Naive thymus-derived CD4-positive, alpha-beta T cell (primary cell): ENCODE measurements at regions of chr6 and their contacts with region 1.

Region 1: GRCh38 chr6:33323623-33323948 is 6.0 kb upstream of the ZBTB22 start:
- DNase-seq: peak in 1 of 9 donors; percentile 26
- ATAC-seq: no peak
- H3K4me3 ChIP-seq: peak overlapping the region; percentile 64
- H3K4me3 Mint-ChIP-seq: peak overlapping the region; percentile 81 to 100 (median 98)
- H3K27ac ChIP-seq: peak overlapping the region; percentile 84
- H3K27ac Mint-ChIP-seq: peak overlapping the region; percentile 89 to 99 (median 97)
- H3K4me1 ChIP-seq: peaks cover 41% of the 10 kb centered on the region in 2 donors
- H3K4me1 Mint-ChIP-seq: peaks cover 34 to 59% (median 53%) of the 10 kb centered on the region in 7 donors
- H3K27me3 ChIP-seq: no peaks in the 10 kb centered on the region
- H3K27me3 Mint-ChIP-seq: peaks cover 0 to 4% (median 0%) of the 10 kb centered on the region in 5 donors

Region 2: GRCh38 chr6:33208091-33208967 is 115.3 kb before region 1 on chr6 and contains the start of gene RING1:
- CTCF ChIA-PET with region 1: no interaction called
- POLR2A ChIA-PET with region 1: no interaction called
- intact Hi-C with region 1: loop called in 1 of 2 experiments (anchors 1 kb)
- DNase-seq: peak; percentile 80 to 93 (median 87)
- ATAC-seq: peak; percentile 79
- H3K4me3 ChIP-seq: peak within 1 kb of the TSS; percentile 92
- H3K4me3 Mint-ChIP-seq: peak within 1 kb of the TSS; percentile 83 to 97 (median 90)
- H3K27ac ChIP-seq: peak within 1 kb of the TSS; percentile 98
- H3K27ac Mint-ChIP-seq: peak within 1 kb of the TSS; percentile 87 to 96 (median 95)
- H3K4me1 ChIP-seq: peaks cover 23 to 34% of the 10 kb centered on the region in 2 donors
- H3K4me1 Mint-ChIP-seq: peaks cover 43 to 58% (median 52%) of the 10 kb centered on the region in 7 donors
- H3K27me3 ChIP-seq: peaks cover 0 to 3% of the 10 kb centered on the region in 2 donors
- H3K27me3 Mint-ChIP-seq: peaks cover 0 to 15% (median 6%) of the 10 kb centered on the region in 5 donors
- total RNA-seq, gene RING1: 36.2 to 47.2 (median 44.5) TPM

Region 3: DNA sequence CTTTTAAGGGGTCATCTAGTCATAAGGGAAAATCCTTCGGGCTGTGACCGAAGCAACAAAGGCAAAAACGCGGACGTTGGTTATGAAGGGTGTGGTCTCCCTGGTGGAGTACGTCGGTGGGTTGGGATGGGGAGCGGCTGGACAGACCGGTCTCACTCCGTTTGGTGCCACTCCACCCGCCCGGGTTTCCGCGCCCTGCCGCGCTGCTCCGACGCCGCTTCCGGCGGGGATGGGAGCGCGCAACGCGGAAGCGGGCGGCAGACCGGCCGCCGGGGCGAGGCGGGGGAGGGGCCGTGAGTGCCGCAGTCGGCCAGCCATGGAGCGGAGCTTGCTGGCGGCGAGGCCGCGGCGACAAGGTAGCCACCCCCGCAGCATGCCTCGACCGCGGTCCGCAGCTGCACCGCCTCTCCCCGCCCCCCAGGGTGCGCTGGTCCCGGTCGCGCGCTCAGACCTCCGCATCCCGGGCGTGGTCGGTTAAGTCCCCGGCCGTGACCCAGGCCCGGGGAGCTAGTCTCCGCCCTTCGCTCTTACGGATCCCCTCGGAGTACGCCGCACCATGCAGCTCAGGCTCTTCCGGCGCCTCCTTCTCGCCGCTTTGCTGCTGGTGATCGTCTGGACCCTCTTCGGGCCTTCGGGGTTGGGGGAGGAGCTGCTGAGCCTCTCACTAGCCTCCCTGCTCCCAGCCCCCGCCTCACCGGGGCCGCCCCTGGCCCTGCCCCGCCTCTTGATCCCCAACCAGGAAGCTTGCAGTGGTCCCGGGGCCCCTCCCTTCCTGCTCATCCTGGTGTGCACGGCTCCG is 46.5 kb before region 1 on chr6 and contains the start of gene B3GALT4:
- CTCF ChIA-PET with region 1: interaction called, 6 read pairs
- POLR2A ChIA-PET with region 1: interaction called, 37 read pairs
- intact Hi-C with region 1: loop called in 1 of 2 experiments (anchors 1 kb)
- DNase-seq: peak; percentile 55 to 88 (median 63)
- ATAC-seq: peak; percentile 81
- H3K4me3 ChIP-seq: peak within 1 kb of the TSS; percentile 67
- H3K4me3 Mint-ChIP-seq: peak within 1 kb of the TSS; percentile 84 to 99 (median 92)
- H3K27ac ChIP-seq: peak within 1 kb of the TSS; percentile 87
- H3K27ac Mint-ChIP-seq: peak within 1 kb of the TSS; percentile 88 to 98 (median 93)
- H3K4me1 ChIP-seq: peaks cover 47 to 50% of the 10 kb centered on the region in 2 donors
- H3K4me1 Mint-ChIP-seq: peaks cover 38 to 83% (median 65%) of the 10 kb centered on the region in 7 donors
- H3K27me3 ChIP-seq: no peaks in the 10 kb centered on the region
- H3K27me3 Mint-ChIP-seq: no peaks in the 10 kb centered on the region
- total RNA-seq, gene B3GALT4: 12.9 to 48.0 (median 18.2) TPM

Region 4: DNA sequence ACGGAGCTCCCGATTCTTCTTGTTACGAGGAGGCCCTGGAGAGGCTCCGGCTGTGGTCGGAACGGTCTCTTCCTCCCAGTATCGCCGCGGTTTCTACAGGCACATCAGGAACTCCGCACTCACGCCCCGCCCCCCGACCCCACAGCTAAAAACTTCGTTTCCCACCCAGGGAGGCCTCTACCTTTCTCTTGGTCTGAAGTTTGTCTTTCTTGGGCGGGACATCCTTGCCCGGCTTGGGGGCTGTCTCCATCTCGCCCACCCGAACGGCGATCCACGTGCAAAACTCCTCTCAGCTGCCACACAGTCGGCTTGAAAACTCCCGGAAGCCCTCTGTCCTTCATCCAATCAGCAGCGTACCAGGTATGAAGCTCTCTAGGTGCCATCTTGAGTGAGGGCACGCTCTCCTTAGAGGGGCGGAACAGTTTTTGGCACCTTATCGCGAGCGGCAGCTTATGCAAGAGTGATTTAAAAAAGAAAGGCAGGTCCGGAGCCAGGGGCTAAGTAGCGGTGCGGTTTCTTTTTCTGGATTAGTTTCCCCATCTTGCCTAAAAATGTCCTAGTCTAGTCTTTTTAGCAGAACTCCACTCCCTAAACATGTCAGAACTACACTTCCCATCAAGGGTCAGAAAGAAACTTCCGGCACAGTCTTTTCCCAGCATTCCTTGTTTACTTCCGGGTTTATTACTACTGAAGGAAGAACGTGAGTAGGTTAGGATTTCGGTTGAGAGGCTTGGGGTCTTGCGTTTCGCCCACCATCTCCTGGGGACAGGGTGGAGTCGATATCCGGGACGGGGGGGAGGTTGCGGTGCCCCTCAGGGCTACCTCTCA is 34.5 kb before region 1 on chr6 and contains the starts of genes PFDN6 and WDR46:
- CTCF ChIA-PET with region 1: no interaction called
- POLR2A ChIA-PET with region 1: interaction called, 36 read pairs
- intact Hi-C with region 1: loop called (anchors 1 kb)
- DNase-seq: peak; percentile 55 to 90 (median 87)
- ATAC-seq: peak; percentile 96
- H3K4me3 ChIP-seq: peak within 1 kb of the TSS; percentile 97
- H3K4me3 Mint-ChIP-seq: peak within 1 kb of the TSS; percentile 89 to 99 (median 98)
- H3K27ac ChIP-seq: peak within 1 kb of the TSS; percentile 80
- H3K27ac Mint-ChIP-seq: peak within 1 kb of the TSS; percentile 89 to 98 (median 92)
- H3K4me1 ChIP-seq: peaks cover 19 to 20% of the 10 kb centered on the region in 2 donors
- H3K4me1 Mint-ChIP-seq: peaks cover 32 to 51% (median 45%) of the 10 kb centered on the region in 7 donors
- H3K27me3 ChIP-seq: no peaks in the 10 kb centered on the region
- H3K27me3 Mint-ChIP-seq: no peaks in the 10 kb centered on the region
- total RNA-seq, gene PFDN6: 14.6 to 73.2 (median 35.5) TPM
- total RNA-seq, gene WDR46: 25.3 to 62.7 (median 52.7) TPM

Region 5: DNA sequence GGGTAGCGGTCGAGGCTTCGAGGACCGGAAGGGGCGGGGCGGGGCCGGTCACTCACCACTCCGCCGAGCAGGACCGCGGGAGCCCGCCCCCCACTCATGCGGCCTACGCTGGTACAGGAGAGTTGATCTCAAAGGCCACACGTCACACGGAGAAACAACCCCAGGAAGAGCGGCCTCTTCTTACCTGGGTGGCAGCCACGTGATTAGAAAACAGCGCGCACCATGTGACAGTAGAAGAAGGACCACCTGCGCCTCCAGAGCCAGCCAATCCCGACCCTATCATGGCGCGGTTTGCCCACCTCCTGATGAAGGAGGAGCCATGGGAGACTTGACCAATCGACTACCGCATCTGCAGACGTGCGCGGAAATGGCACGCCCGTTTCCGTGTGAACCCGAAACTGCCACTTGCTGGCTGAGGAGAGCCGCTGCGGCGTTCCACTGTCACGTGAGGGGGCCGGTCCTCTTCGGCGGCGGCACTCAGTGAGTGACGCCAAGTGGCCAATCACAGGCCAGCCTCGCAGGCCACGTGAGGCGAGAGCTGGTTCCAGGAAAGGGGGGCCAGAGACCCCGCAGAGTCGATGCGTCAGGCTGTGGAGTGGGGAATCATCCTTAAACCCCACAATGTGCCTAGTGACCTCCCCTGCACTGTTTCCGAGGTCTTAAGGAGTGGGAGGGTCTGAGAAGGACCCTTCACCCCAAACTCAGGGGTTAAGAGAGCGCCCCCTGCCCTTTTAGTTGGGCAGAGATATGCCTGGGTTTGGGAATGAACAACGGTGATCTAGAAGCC is 94.5 kb after region 1 on chr6 and contains the start of gene CUTA:
- CTCF ChIA-PET with region 1: interaction called, 3 read pairs
- POLR2A ChIA-PET with region 1: interaction called, 16 read pairs
- intact Hi-C with region 1: loop called in 1 of 2 experiments (anchors 1 kb)
- DNase-seq: peak; percentile 91 to 100 (median 99)
- ATAC-seq: peak; percentile 92
- H3K4me3 ChIP-seq: peak within 1 kb of the TSS; percentile 74
- H3K4me3 Mint-ChIP-seq: peak within 1 kb of the TSS; percentile 88 to 97 (median 94)
- H3K27ac ChIP-seq: peak within 1 kb of the TSS; percentile 94
- H3K27ac Mint-ChIP-seq: peak within 1 kb of the TSS; percentile 98 to 100 (median 99)
- H3K4me1 ChIP-seq: peaks cover 31 to 54% of the 10 kb centered on the region in 2 donors
- H3K4me1 Mint-ChIP-seq: peaks cover 60 to 89% (median 73%) of the 10 kb centered on the region in 7 donors
- H3K27me3 ChIP-seq: no peaks in the 10 kb centered on the region
- H3K27me3 Mint-ChIP-seq: no peaks in the 10 kb centered on the region
- total RNA-seq, gene CUTA: 148 to 235 (median 158) TPM

Region 6: GRCh38 chr6:33430991-33431879 is 107.6 kb after region 1 on chr6:
- CTCF ChIA-PET with region 1: no interaction called
- POLR2A ChIA-PET with region 1: interaction called, 12 read pairs
- intact Hi-C with region 1: loop called in 1 of 2 experiments (anchors 1 kb)
- DNase-seq: peak; percentile 65 to 89 (median 87)
- ATAC-seq: peak; percentile 82
- H3K4me3 ChIP-seq: peak overlapping the region; percentile 52
- H3K4me3 Mint-ChIP-seq: peak overlapping the region; percentile 86 to 98 (median 92)
- H3K27ac ChIP-seq: peak overlapping the region; percentile 88
- H3K27ac Mint-ChIP-seq: peak overlapping the region; percentile 81 to 98 (median 96)
- H3K4me1 ChIP-seq: peaks cover 42 to 51% of the 10 kb centered on the region in 2 donors
- H3K4me1 Mint-ChIP-seq: peaks cover 56 to 69% (median 64%) of the 10 kb centered on the region in 7 donors
- H3K27me3 ChIP-seq: no peaks in the 10 kb centered on the region
- H3K27me3 Mint-ChIP-seq: no peaks in the 10 kb centered on the region

Region 7: GRCh38 chr6:33454009-33454946 is 130.7 kb after region 1 on chr6 and contains the start of gene ZBTB9:
- CTCF ChIA-PET with region 1: no interaction called
- POLR2A ChIA-PET with region 1: no interaction called
- intact Hi-C with region 1: loop called in 1 of 2 experiments (anchors 1 kb)
- DNase-seq: peak; percentile 80 to 93 (median 92)
- ATAC-seq: peak; percentile 100
- H3K4me3 ChIP-seq: peak within 1 kb of the TSS; percentile 93
- H3K4me3 Mint-ChIP-seq: peak within 1 kb of the TSS; percentile 88 to 99 (median 95)
- H3K27ac ChIP-seq: peak within 1 kb of the TSS; percentile 88
- H3K27ac Mint-ChIP-seq: peak within 1 kb of the TSS; percentile 86 to 98 (median 92)
- H3K4me1 ChIP-seq: peaks cover 12 to 22% of the 10 kb centered on the region in 2 donors
- H3K4me1 Mint-ChIP-seq: peaks cover 21 to 57% (median 45%) of the 10 kb centered on the region in 7 donors
- H3K27me3 ChIP-seq: no peaks in the 10 kb centered on the region
- H3K27me3 Mint-ChIP-seq: no peaks in the 10 kb centered on the region
- total RNA-seq, gene ZBTB9: 3.3 to 14.0 (median 9.8) TPM

Region 8: GRCh38 chr6:35024551-35025054 is 1701.0 kb after region 1 on chr6:
- CTCF ChIA-PET with region 1: no interaction called
- POLR2A ChIA-PET with region 1: no interaction called
- intact Hi-C with region 1: no loop called
- DNase-seq: no peak
- ATAC-seq: peak; percentile 54
- H3K4me3 ChIP-seq: no peak overlapping the region
- H3K4me3 Mint-ChIP-seq: no peak overlapping the region
- H3K27ac ChIP-seq: no peak overlapping the region
- H3K27ac Mint-ChIP-seq: no peak overlapping the region
- H3K4me1 ChIP-seq: no peaks in the 10 kb centered on the region
- H3K4me1 Mint-ChIP-seq: peaks cover 0 to 2% (median 0%) of the 10 kb centered on the region in 7 donors
- H3K27me3 ChIP-seq: no peaks in the 10 kb centered on the region
- H3K27me3 Mint-ChIP-seq: no peaks in the 10 kb centered on the region